CD8-positive, alpha-beta T cell (primary cell): ENCODE measurements at regions of chr4 and their contacts with region 1.

Region 1: GRCh38 chr4:144645631-144646522 is at the start of gene HHIP:
- DNase-seq: peak in 3 of 9 experiments; percentile 12 to 47 (median 12)
- ATAC-seq: peak; percentile 58
- H3K4me3 ChIP-seq: peak within 1 kb of the TSS in 1 of 2 experiments; percentile 23
- H3K4me3 Mint-ChIP-seq: peak within 1 kb of the TSS; percentile 82
- H3K27ac ChIP-seq: no peak within 1 kb of the TSS
- H3K27ac Mint-ChIP-seq: no peak within 1 kb of the TSS
- H3K4me1 ChIP-seq: peaks cover 9% of the 10 kb centered on the region
- H3K4me1 Mint-ChIP-seq: peaks cover 26% of the 10 kb centered on the region
- H3K27me3 ChIP-seq: peaks cover 4 to 7% of the 10 kb centered on the region in 2 experiments
- H3K27me3 Mint-ChIP-seq: peaks cover 46% of the 10 kb centered on the region
- CTCF ChIP-seq: no peak
- total RNA-seq, gene HHIP: not detected

Region 2: GRCh38 chr4:144494281-144494680 is 151.6 kb before region 1 on chr4:
- CTCF ChIA-PET with region 1: no interaction called
- POLR2A ChIA-PET with region 1: no interaction called
- intact Hi-C with region 1: no loop called
- DNase-seq: no peak
- ATAC-seq: no peak
- H3K4me3 ChIP-seq: no peak overlapping the region
- H3K4me3 Mint-ChIP-seq: no peak overlapping the region
- H3K27ac ChIP-seq: no peak overlapping the region
- H3K27ac Mint-ChIP-seq: no peak overlapping the region
- H3K4me1 ChIP-seq: no peaks in the 10 kb centered on the region
- H3K4me1 Mint-ChIP-seq: no peaks in the 10 kb centered on the region
- H3K27me3 ChIP-seq: no peaks in the 10 kb centered on the region
- H3K27me3 Mint-ChIP-seq: no peaks in the 10 kb centered on the region
- CTCF ChIP-seq: no peak

Region 3: GRCh38 chr4:144614850-144615585 is 30.9 kb before region 1 on chr4:
- CTCF ChIA-PET with region 1: no interaction called
- POLR2A ChIA-PET with region 1: no interaction called
- intact Hi-C with region 1: loop called in 1 of 2 experiments (anchors 2 kb)
- DNase-seq: no peak
- ATAC-seq: no peak
- H3K4me3 ChIP-seq: no peak overlapping the region
- H3K4me3 Mint-ChIP-seq: no peak overlapping the region
- H3K27ac ChIP-seq: no peak overlapping the region
- H3K27ac Mint-ChIP-seq: no peak overlapping the region
- H3K4me1 ChIP-seq: no peaks in the 10 kb centered on the region
- H3K4me1 Mint-ChIP-seq: no peaks in the 10 kb centered on the region
- H3K27me3 ChIP-seq: no peaks in the 10 kb centered on the region
- H3K27me3 Mint-ChIP-seq: no peaks in the 10 kb centered on the region
- CTCF ChIP-seq: no peak